Ascending aorta (tissue), 2 donors: ENCODE measurements at regions of chr17 and their contacts with region 1.

Region 1: GRCh38 chr17:27245230-27245696 is 48.7 kb upstream of the WSB1 start:
- DNase-seq: peak; percentile 79 to 93
- H3K4me3 ChIP-seq: peak overlapping the region; percentile 52 to 56
- H3K27ac ChIP-seq: peak overlapping the region; percentile 90 to 94
- H3K4me1 ChIP-seq: peaks cover 4 to 37% of the 10 kb centered on the region in 2 donors
- H3K27me3 ChIP-seq: no peaks in the 10 kb centered on the region
- CTCF ChIP-seq: peak; percentile 61 to 76 (median 70)

Region 2: GRCh38 chr17:27109346-27109745 is 135.9 kb before region 1 on chr17:
- intact Hi-C with region 1: no loop called
- DNase-seq: no peak
- H3K4me3 ChIP-seq: no peak overlapping the region
- H3K27ac ChIP-seq: no peak overlapping the region
- H3K4me1 ChIP-seq: no peaks in the 10 kb centered on the region
- H3K27me3 ChIP-seq: no peaks in the 10 kb centered on the region
- CTCF ChIP-seq: no peak

Region 3: DNA sequence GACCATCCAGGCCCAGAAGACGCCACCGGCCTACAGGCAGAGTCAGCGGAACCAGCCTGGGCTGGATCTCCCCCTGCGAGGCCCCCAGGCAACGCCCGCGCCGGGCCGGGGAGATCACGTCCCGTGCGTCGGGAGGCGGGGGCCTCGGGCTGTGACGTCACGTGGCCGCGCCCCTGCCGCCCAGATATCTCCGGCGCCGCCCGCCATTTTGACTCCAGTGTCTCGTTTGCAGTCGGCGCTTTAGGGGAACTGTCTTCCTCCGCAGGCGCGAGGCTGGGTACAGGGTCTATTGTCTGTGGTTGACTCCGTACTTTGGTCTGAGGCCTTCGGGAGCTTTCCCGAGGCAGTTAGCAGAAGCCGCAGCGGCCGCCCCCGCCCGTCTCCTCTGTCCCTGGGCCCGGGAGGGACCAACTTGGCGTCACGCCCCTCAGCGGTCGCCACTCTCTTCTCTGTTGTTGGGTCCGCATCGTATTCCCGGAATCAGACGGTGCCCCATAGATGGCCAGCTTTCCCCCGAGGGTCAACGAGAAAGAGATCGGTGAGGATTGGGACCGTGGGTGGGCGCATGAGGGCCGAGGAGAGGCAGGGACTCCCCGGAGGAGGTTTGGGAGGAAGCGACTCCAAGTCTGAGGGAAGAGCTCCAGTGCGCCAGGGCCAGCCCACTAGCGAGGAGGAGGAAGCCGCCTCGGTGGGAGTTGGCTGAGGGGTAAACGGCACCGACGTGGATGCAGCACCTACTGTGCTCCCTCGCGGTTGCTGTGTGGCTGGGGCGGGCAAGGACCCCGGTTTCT is 48.8 kb after region 1 on chr17 and contains the start of gene WSB1:
- intact Hi-C with region 1: loop called (anchors 1 kb)
- DNase-seq: peak; percentile 78 to 96
- H3K4me3 ChIP-seq: peak within 1 kb of the TSS; percentile 72 to 76
- H3K27ac ChIP-seq: peak within 1 kb of the TSS; percentile 98 to 99
- H3K4me1 ChIP-seq: peaks cover 13 to 28% of the 10 kb centered on the region in 2 donors
- H3K27me3 ChIP-seq: no peaks in the 10 kb centered on the region
- CTCF ChIP-seq: no peak
- total RNA-seq, gene WSB1: 176 TPM

Region 4: DNA sequence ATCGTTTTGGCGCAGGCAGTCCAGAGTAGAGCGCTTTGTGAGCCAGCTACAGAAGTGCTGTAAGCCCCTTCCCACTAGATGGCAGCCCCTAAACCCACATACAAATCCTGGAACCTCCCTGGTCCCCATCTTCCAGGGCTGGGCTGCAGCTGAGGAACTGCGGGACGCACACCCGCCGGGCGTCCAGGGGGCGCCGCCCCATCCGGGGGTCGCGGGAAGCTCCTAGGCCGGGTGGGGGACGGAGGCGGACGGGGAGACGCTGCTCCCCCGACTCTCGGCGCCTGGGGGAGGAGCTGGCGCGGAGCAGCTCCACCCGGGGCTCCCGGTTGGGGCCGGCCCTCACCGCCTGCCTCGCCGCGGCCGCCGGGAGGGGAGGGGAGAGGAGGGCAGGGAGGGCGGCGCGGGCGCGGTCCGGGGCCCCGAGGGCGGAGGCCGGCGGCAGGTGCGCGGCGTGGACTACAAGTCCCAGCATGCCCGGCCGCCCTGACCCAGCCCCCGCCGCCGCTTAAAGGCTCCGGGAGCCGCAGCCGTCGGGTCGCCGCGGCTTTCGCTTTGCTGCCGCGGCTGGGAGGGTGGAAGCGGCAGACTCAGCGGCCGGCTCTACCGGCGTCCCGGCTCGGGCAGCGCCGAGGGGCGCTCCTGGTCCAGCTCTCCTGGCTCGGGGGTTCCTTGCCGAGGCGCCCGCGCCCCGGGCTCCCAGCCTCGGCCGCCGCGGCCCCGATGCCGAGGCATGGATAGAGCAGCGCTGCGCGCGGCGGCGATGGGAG is 210.8 kb after region 1 on chr17 and contains the start of gene KSR1:
- intact Hi-C with region 1: loop called (anchors 5 kb)
- DNase-seq: peak; percentile 49 to 87
- H3K4me3 ChIP-seq: peak within 1 kb of the TSS; percentile 93
- H3K27ac ChIP-seq: peak within 1 kb of the TSS; percentile 90 to 91
- H3K4me1 ChIP-seq: peaks cover 0 to 12% of the 10 kb centered on the region in 2 donors
- H3K27me3 ChIP-seq: no peaks in the 10 kb centered on the region
- CTCF ChIP-seq: peak; percentile 14 to 36 (median 25)
- total RNA-seq, gene KSR1: 42.6 TPM

Region 5: DNA sequence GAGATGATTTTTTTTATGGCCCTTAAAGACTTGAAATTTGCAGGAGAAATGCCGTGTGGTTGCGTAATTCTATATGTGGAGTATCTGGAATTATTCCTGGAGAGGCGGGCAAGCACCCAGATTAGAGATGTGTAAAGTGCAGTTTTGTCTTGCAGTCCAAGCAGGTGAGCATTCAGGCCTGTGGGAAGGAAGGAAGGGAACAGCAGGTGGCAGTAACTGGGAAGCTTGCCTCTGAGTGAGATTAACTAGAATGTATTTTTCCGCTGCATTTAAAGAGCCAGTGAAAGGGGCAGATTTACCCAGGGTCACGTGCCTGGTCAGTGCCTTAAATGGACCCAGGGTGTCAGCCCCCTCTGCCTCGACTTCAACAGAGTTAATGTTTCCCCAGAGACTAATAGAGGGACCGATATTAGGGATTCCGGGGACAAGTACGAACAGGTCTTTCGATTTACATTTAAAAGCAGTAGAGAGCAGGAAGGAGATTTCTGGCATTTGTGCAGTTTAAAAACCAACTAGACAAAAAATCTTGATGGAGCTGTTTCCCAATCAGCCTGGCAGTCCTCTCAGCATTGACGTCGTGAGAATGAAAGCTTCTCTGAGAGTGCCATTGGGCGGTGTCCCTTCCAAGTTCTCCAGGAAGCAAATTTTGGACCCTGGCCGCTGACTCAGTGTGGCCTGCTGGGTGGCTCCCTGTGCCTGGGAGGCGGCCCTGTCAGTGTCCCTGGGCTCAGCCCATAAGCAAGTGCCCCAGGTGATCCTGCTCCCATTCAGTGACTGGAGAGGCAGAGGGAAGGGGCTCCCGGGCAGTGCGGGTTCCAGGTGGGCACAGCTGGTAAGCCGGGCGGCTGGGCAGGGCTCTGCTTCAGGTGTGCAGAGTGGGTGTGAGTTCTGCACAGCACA is 249.2 kb after region 1 on chr17:
- intact Hi-C with region 1: loop called (anchors 5 kb)
- DNase-seq: peak; percentile 58 to 91
- H3K4me3 ChIP-seq: peak overlapping the region; percentile 16 to 47
- H3K27ac ChIP-seq: peak overlapping the region; percentile 65 to 69
- H3K4me1 ChIP-seq: peaks cover 0 to 12% of the 10 kb centered on the region in 2 donors
- H3K27me3 ChIP-seq: no peaks in the 10 kb centered on the region
- CTCF ChIP-seq: peak in 2 of 3 experiments; percentile 27 to 62